MCF 10A (cell line): ENCODE measurements at regions of chr11 and their contacts with region 1.

Region 1: DNA sequence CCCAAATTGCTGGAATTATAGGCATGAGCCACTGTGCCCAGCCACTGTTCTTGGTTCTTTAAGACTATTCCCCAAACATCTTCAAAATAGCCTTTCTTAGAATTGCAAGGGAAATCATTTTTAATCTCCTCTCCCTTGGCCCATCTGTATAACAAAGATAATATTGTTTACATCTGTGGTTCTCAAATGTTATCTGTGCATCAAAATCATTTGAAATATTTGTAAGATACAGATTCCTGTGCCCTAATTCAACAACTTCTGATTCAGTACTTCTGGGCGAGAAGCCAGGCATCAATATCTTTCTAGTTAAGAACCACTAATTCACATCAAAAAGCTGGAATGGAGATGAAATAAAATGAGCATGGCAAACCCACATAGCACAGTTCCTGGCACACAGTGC is 83.0 kb downstream of the TMPRSS5 start:
- DNase-seq: no peak
- H3K4me3 Mint-ChIP-seq: no peak overlapping the region
- H3K27ac Mint-ChIP-seq: no peak overlapping the region
- H3K4me1 Mint-ChIP-seq: no peaks in the 10 kb centered on the region
- H3K27me3 Mint-ChIP-seq: no peaks in the 10 kb centered on the region
- CTCF ChIP-seq: no peak

Region 2: DNA sequence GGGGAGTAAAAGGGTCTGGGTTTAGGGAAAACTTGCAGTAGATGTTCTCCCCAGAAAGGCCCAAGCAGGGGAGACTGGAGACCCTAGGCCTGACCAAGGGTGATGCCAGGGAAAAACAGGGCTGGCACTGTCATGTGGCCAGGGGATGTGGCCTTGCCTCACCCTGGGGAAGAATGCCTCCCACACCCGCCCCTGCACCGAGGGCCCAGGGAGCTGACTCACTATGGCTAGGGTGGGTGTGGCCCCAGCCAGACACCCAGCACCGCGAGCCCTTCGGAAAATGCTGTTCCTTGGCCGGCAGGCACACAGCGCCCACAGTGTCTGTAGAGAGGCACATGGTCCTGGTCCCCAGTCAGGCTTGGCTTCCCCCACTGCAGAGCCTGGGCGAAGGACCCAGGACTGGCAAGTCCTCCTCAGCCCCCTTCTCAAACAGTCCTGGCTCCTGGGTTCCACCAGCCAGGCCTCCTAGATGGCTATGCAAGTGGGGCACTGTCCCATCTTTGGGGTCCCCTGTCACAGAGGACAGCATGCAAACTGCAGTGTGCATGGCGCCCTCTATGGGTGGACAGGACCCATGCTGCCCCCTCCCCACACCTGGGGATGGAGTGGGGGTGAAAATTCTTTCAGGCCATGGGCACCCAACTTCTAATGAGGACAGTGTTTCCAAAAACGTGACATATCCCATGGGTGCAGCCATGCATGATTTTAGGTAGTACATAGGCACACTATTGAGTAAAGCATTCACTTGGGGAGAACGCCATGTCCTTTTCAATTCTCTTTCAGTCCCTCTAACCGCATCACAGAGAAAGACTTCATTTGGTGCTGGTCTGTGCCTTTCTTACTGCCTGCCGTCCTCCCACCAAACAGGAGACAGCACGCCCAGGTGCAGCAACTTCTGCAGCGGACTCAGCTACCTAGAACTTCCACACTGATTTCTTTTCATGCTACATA is 67.8 kb after region 1 on chr11:
- CTCF ChIA-PET with region 1: no interaction called
- POLR2A ChIA-PET with region 1: no interaction called
- intact Hi-C with region 1: loop called (anchors 5 kb)
- DNase-seq: peak; percentile 89
- H3K4me3 Mint-ChIP-seq: no peak overlapping the region
- H3K27ac Mint-ChIP-seq: peak overlapping the region; percentile 59
- H3K4me1 Mint-ChIP-seq: peaks cover 15% of the 10 kb centered on the region
- H3K27me3 Mint-ChIP-seq: no peaks in the 10 kb centered on the region
- CTCF ChIP-seq: peak; percentile 19

Region 3: DNA sequence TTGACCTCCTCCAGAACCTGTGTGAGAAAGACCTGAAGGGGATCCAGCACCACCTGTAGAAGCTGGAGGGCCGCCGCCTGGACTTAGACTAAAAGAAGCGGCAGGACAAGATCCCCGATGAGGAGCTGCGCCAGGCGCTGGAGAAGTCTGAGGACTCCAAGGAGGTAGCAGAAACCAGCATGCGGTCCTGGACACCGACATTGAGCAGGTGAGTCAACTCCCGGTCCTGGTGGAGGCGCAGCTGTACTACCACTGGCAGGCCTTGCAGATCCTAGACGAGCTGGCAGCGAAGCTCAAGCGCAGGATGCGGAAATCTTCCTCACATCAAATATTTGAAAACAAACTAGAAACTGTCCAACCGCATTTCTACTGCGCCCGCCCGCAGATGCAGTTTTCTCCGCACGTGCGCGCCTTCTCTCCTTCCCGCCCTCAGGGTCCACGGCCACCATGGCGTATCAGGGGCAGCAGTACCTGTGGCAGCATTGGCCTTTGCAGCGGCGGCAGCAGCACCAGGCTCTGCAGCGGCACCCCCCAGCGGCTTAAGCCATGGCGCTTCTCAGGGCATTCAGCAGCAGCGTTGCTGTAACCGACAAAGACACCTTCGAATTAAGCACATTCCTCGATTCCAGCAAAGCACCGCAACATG is 166.7 kb after region 1 on chr11:
- CTCF ChIA-PET with region 1: no interaction called
- POLR2A ChIA-PET with region 1: no interaction called
- intact Hi-C with region 1: no loop called
- DNase-seq: no peak
- H3K4me3 Mint-ChIP-seq: no peak overlapping the region
- H3K27ac Mint-ChIP-seq: no peak overlapping the region
- H3K4me1 Mint-ChIP-seq: no peaks in the 10 kb centered on the region
- H3K27me3 Mint-ChIP-seq: no peaks in the 10 kb centered on the region
- CTCF ChIP-seq: no peak